ENCODE measurements at regions of chr12 and their contacts with region 1.

Region 1: DNA sequence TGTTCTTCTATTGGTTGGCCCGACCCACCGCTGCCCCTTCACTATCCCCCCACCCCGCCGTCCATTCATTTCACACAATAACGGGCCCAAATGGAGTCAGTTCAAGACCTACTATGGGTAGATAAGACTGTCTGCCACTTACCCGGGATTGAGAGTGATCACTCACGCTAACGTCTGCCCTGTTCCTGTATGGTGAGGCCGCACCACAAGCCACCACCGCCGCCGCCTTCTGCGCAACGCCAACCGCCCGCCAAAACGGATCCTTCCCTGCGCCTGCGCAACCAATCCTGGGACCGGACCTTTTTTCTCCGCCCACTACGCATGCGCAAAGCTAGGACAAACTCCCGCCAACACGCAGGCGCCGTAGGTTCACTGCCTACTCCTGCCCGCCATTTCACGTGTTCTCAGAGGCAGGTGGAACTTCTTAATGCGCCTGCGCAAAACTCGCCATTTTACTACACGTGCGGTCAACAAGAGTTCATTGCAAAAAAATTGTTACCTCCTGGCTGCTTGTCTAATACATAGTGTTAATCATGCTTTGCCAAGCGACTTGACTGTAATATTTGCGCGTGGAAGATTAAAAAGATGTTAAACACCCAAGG is at the start of gene CBX5:
- DNase-seq: peak; percentile 99
- ATAC-seq: peak; percentile 57
- H3K4me3 Mint-ChIP-seq: no peak within 1 kb of the TSS
- H3K27ac Mint-ChIP-seq: no peak within 1 kb of the TSS
- H3K4me1 Mint-ChIP-seq: peaks cover 43% of the 10 kb centered on the region
- H3K27me3 Mint-ChIP-seq: no peaks in the 10 kb centered on the region
- CTCF ChIP-seq: no peak
- total RNA-seq, gene CBX5: 125 to 128 TPM

Region 2: GRCh38 chr12:54259194-54260011 is 20.6 kb before region 1 on chr12:
- CTCF ChIA-PET with region 1: interaction called, 3 read pairs
- POLR2A ChIA-PET with region 1: interaction called, 17 read pairs
- intact Hi-C with region 1: no loop called
- DNase-seq: peak; percentile 63
- ATAC-seq: peak; percentile 97
- H3K4me3 Mint-ChIP-seq: peak overlapping the region; percentile 56
- H3K27ac Mint-ChIP-seq: peak overlapping the region; percentile 53
- H3K4me1 Mint-ChIP-seq: peaks cover 23% of the 10 kb centered on the region
- H3K27me3 Mint-ChIP-seq: no peaks in the 10 kb centered on the region
- CTCF ChIP-seq: no peak

Region 3: DNA sequence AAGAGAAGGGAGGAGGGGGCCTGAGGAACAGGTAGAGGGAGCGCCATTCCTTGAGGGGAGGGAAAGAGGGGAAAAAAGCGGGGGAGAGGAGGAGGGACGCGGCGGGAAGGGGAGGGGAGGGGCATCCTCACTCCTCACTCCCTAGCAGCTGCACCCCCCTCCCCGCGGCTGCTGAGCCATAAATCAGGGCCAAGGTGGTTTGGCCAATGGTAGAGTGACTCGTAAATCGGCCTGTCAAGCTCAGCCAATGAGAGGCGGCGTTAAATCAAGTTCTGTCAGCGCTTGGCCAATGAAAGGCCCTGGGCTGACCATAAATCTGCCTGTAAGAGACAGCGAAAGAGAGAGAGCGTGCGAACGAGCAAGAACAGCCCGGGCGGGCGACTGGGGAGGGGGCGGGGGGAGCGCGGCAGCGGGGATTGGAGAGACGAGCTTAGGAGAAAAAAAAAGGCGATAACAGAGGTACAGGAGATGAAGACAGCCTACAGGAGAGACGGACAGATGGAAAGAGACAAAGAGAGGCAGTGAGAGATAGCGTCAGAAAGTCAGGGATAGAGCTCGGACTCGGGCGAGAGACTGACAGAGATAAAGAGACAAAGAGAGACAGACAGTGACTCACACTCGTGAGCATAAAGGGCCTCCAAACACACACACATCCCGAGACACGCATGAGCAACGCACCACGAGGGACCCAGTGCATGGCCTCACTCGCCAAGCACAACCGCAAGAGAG is 79.2 kb after region 1 on chr12:
- CTCF ChIA-PET with region 1: interaction called, 3 read pairs
- POLR2A ChIA-PET with region 1: interaction called, 70 read pairs
- intact Hi-C with region 1: no loop called
- DNase-seq: peak; percentile 97
- ATAC-seq: peak; percentile 93
- H3K4me3 Mint-ChIP-seq: no peak overlapping the region
- H3K27ac Mint-ChIP-seq: no peak overlapping the region
- H3K4me1 Mint-ChIP-seq: peaks cover 17% of the 10 kb centered on the region
- H3K27me3 Mint-ChIP-seq: no peaks in the 10 kb centered on the region
- CTCF ChIP-seq: no peak